ENCODE measurements at regions of chr12 and their contacts with region 1.

Region 1: GRCh38 chr12:12376646-12377448 is 20.0 kb downstream of the BORCS5 start:
- DNase-seq: peak in 1 of 2 donors; percentile 84
- ATAC-seq: peak; percentile 47 to 66 (median 48)
- H3K4me3 ChIP-seq: no peak overlapping the region
- H3K4me3 Mint-ChIP-seq: no peak overlapping the region
- H3K27ac ChIP-seq: no peak overlapping the region
- H3K27ac Mint-ChIP-seq: peak overlapping the region; percentile 42 to 76
- H3K4me1 ChIP-seq: peaks cover 27% of the 10 kb centered on the region
- H3K4me1 Mint-ChIP-seq: peaks cover 37 to 47% of the 10 kb centered on the region in 2 donors
- H3K27me3 ChIP-seq: no peaks in the 10 kb centered on the region
- H3K27me3 Mint-ChIP-seq: no peaks in the 10 kb centered on the region
- CTCF ChIP-seq: peak; percentile 77

Region 2: DNA sequence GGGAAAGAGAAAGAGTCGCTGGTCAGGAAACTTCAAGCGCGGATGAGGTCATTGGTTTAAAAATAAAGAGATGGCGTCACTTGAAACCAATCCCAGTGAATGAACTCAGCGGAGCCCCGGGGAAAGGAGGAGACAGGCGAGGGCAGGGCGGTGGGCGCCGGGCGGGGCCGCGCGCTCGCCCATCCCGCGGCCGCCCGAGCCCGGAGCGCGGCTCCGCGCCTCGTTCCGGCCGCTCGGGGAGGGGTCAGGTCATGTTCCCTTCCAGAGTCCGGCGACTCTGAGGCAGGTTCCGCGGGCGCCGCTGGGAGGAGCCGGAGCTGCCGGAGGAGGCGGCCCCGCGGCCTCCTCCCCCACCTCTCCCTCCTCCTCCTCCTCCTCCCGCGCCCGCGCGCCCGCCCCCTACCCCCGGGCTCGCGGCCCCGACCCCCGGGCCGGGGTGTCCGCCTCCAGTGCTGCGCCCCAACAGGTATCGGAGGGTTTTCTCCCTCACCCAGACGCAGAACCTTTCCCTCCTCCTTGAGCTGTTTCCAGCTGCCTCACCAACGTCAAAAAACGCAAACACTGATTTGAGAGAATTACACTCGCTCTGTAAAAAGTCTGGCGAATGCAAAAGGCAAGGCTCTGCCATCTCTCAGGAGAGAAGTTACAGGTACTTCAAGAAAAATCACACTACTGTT is 185.9 kb after region 1 on chr12 and contains the start of gene DUSP16:
- intact Hi-C with region 1: loop called (anchors 1 kb)
- DNase-seq: peak; percentile 74 to 93
- ATAC-seq: peak; percentile 74 to 92 (median 84)
- H3K4me3 ChIP-seq: peak within 1 kb of the TSS; percentile 67
- H3K4me3 Mint-ChIP-seq: peak within 1 kb of the TSS; percentile 95
- H3K27ac ChIP-seq: peak within 1 kb of the TSS; percentile 88
- H3K27ac Mint-ChIP-seq: peak within 1 kb of the TSS; percentile 90 to 96
- H3K4me1 ChIP-seq: peaks cover 10% of the 10 kb centered on the region
- H3K4me1 Mint-ChIP-seq: peaks cover 10 to 13% of the 10 kb centered on the region in 2 donors
- H3K27me3 ChIP-seq: no peaks in the 10 kb centered on the region
- H3K27me3 Mint-ChIP-seq: peaks cover 0 to 3% of the 10 kb centered on the region in 2 donors
- CTCF ChIP-seq: no peak
- total RNA-seq, gene DUSP16: 6.9 to 19.9 (median 10.0) TPM

Region 3: DNA sequence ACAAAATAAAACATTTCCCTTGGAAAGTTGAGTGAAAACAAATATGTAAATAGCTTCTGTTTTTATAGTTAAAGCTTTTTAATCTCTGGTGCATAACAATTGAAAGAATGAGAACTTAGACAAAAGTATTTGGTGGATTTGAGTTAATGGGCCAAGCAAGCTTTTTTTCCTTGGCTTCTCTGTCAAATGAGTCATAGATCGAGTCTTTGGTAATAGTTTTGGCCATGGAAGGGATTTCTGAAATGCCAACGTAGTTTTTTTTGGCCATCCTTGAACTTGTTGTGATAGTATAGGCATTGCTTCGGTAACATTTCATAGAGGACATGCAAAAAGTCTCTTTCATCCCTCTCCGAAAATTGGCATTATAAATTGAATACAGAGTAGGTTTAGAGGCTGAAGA is 284.2 kb after region 1 on chr12:
- intact Hi-C with region 1: loop called (anchors 1 kb)
- DNase-seq: no peak
- ATAC-seq: no peak
- H3K4me3 ChIP-seq: no peak overlapping the region
- H3K4me3 Mint-ChIP-seq: no peak overlapping the region
- H3K27ac ChIP-seq: no peak overlapping the region
- H3K27ac Mint-ChIP-seq: no peak overlapping the region
- H3K4me1 ChIP-seq: no peaks in the 10 kb centered on the region
- H3K4me1 Mint-ChIP-seq: peaks cover under 1% of the 10 kb centered on the region in 2 donors
- H3K27me3 ChIP-seq: no peaks in the 10 kb centered on the region
- H3K27me3 Mint-ChIP-seq: no peaks in the 10 kb centered on the region
- CTCF ChIP-seq: no peak

Region 4: GRCh38 chr12:12704593-12705230 is 327.9 kb after region 1 on chr12:
- intact Hi-C with region 1: loop called (anchors 1 kb)
- DNase-seq: peak in 1 of 2 donors; percentile 80
- ATAC-seq: peak; percentile 90 to 99 (median 93)
- H3K4me3 ChIP-seq: no peak overlapping the region
- H3K4me3 Mint-ChIP-seq: peak overlapping the region; percentile 62
- H3K27ac ChIP-seq: no peak overlapping the region
- H3K27ac Mint-ChIP-seq: peak overlapping the region; percentile 68 to 77
- H3K4me1 ChIP-seq: peaks cover 23% of the 10 kb centered on the region
- H3K4me1 Mint-ChIP-seq: peaks cover 15 to 17% of the 10 kb centered on the region in 2 donors
- H3K27me3 ChIP-seq: no peaks in the 10 kb centered on the region
- H3K27me3 Mint-ChIP-seq: no peaks in the 10 kb centered on the region
- CTCF ChIP-seq: peak; percentile 82

Region 5: DNA sequence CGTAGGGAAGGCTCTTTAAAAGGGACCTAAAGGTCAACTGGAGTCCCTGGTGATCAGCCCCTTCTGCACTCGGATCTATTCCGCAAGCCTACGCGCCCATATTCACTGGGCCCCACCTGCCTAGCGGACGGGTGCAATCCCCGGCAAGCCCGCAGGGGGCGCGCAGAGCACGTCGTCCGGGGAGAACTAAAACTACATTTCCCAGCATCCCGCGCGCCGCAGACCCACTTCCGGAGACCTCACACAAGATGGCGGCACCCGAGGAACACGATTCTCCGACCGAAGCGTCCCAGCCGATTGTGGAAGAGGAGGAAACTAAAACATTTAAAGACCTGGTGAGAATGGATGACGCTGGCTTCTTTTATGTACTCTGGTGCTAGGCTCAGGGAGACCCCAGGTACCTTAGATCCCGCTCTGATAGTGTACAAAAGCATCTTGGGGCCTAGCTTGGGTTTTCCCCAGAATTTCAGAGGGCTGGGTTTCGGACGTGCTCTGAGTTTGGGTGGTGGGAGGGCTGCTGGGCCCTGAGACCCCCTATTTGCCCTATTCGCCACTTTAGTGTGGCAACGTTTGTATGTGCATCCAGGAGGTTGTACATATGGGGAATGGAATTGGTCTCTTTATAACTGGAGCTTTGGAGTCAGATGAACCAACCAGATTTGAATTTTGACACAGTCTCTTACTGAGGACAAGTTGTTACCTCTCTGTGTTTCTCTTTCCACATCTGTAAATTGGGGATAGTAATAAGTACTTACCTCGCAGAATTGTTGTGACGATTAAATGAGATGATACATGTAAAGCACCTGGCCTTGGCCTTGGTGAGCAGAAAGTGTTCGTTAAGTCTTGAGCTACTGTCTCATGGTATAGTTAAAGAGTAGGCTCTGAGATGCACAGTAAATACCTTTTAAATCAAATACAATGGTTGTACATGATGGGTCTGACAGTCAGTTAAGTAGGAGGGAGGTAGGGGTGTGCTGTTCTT is 436.6 kb after region 1 on chr12 and contains the start of gene DDX47:
- intact Hi-C with region 1: loop called (anchors 2 kb)
- DNase-seq: peak; percentile 97 to 98
- ATAC-seq: peak; percentile 98 to 100 (median 99)
- H3K4me3 ChIP-seq: peak within 1 kb of the TSS; percentile 76
- H3K4me3 Mint-ChIP-seq: peak within 1 kb of the TSS; percentile 95
- H3K27ac ChIP-seq: peak within 1 kb of the TSS; percentile 76
- H3K27ac Mint-ChIP-seq: peak within 1 kb of the TSS; percentile 91 to 93
- H3K4me1 ChIP-seq: peaks cover 23% of the 10 kb centered on the region
- H3K4me1 Mint-ChIP-seq: peaks cover 44 to 50% of the 10 kb centered on the region in 2 donors
- H3K27me3 ChIP-seq: no peaks in the 10 kb centered on the region
- H3K27me3 Mint-ChIP-seq: no peaks in the 10 kb centered on the region
- CTCF ChIP-seq: peak; percentile 89
- total RNA-seq, gene DDX47: 98.9 to 120 (median 114) TPM